GM13976 (cell line): ENCODE measurements at regions of chr17 and their contacts with region 1.

Region 1: GRCh38 chr17:1331708-1332107 is 52.2 kb downstream of the TRARG1 start:
- DNase-seq: no peak
- CTCF ChIP-seq: no peak

Region 2: DNA sequence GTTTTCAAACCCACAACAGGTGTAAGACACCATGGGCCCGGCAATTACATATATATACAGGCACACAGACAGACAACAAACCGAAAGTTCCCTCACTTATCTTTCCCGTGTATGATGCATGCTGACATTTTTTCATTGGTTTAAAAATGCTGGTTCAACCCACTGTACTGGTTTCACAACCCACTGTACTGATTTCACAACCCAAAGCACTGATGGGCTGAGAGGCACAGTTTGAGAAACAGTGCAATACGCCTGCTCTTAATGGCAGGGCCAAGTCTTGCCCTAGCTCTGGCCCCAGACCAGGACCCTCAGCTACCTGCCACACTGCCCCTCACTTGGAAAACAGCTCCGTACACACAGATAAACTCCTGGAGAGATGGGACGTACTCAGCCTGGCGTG is 233.3 kb before region 1 on chr17:
- in situ Hi-C with region 1: no loop called
- DNase-seq: no peak
- CTCF ChIP-seq: no peak

Region 3: DNA sequence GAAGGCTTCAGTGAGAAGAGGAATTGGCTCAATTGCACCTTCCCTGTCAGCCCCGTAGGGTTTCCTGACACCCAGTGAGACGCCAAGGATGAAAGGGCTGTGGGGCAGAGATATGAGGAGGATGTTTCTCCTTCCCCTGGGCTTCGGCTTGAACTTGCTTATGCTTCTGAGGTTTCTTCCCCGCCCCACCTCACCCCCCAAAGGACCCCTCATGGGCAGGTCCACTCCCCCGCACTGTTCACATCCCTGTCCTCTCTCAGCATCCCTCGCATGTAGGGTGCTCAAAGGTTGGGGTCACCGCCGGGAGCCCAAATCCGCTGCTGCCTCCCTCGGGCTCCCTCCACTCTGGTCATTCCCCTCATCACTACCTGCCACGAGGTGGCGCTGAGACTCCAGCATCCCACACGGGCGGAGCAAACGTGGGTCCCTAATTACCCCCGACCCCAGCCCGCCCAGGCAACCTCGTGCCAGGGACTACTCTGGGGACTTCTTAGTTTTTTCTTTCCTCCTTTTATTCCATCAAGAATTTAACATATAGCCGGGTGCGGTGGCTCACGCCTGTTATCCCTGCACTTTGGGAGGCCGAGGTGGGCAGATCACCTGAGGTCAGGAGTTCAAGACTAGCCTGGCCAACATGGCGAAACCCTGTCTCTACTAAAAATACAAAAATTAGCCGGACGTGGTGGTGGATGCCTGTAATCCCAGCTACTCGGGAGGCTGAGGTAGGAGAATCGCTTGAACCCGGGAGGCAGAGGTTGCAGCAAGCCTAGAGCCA is 55.6 kb before region 1 on chr17:
- in situ Hi-C with region 1: loop called (anchors 10 kb)
- DNase-seq: peak; percentile 86
- CTCF ChIP-seq: peak; percentile 81